Activated T-helper 1 cell treated with anti-CD3 and anti-CD28 coated beads, Interleukin-12 subunit alpha, Interleukin-12 subunit beta, Interleukin-2, Interleukin-4 antibody, amounts not matched to agents 30 ng/mL and 10 ng/mL and 1 ng/mL, durations not matched to agents 14 hours and 24 hours and 36 hours (primary cell): ENCODE measurements at regions of chr3 and their contacts with region 1.

Region 1: DNA sequence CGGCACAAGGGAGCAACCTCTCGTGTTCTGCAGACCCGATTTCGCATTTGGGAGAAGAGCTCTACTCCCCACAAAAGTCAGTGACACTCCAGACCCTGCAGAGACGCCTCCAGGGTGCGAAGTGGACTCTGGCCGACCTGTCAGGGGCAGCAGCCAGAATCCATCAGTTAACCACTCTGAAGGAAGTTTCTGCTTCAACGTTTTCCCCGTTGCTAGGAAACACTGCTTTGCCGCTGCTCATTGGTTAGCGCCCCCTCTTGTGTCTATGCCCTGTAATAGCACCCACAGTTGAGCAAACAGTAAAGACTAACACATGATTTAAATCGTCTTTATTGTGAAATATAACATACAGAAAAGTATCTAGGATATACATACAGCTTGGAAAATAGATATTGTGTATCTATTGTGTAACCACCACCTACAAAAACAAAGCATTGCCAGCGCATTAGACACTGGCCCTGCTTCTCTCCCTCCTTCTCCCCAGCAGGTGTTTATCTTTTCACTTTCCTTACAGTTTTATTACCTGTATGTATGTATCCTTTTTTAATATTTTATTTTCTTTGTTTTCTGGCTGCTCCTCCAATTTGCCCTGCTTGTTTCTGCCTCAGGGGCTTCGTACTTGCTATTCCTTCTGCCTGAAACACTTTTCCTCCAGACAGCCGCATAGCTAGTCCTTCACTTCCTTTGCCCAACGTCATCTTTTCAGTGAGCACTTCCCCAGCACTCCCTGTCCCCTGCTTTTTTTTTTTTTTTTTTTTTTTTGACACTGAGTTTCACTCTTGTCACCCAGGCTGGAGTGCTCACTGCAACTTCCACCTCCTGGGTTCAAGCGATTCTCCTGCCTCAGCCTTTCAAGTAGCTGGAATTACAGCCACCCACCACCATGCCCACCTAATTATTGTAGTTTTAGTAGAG is 38.8 kb downstream of the TMEM40 start:
- DNase-seq: peak; percentile 66
- H3K4me3 Mint-ChIP-seq: no peak overlapping the region
- H3K27ac Mint-ChIP-seq: peak overlapping the region; percentile 41
- H3K4me1 Mint-ChIP-seq: peaks cover 9% of the 10 kb centered on the region
- H3K27me3 Mint-ChIP-seq: peaks cover 5% of the 10 kb centered on the region

Region 2: GRCh38 chr3:12608376-12608775 is 111.9 kb before region 1 on chr3:
- intact Hi-C with region 1: loop called (anchors 5 kb)
- DNase-seq: no peak
- H3K4me3 Mint-ChIP-seq: no peak overlapping the region
- H3K27ac Mint-ChIP-seq: no peak overlapping the region
- H3K4me1 Mint-ChIP-seq: peaks cover 26% of the 10 kb centered on the region
- H3K27me3 Mint-ChIP-seq: no peaks in the 10 kb centered on the region

Region 3: DNA sequence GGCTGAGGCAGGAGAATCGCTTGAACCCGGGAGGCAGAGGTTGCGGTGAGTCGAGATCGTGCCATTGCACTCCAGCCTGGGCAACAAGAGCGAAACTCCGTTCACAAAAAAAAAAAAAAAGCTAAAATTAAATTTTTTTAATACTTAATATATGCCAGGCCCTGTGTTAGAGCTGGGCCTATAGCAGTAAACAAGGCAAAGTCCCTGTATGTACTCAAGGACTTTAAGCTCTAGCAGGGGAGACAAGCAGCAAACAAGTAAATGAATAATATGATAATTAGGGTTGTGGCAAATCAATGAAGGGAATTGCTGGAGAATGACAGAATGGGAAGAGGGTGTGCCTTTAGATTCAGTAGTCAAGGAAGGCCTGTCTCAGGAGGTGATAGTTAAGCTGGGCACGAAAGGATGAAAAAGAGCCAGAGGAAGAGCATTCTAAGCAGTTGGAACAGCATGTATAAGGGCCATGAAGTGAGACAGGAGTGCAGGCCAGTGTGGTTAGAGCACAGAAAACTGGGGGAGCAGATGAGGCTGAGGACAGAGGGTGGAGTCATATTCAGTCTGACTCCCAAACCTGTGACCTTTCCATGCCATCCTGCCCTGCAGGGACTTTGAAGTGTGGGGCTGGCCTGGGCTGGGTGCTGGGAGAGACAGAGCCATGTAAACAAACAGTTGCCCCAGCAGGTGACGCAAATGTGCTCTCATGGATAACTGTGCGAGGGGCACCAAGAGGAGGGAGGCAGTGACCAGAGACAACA is 49.7 kb before region 1 on chr3:
- intact Hi-C with region 1: no loop called
- DNase-seq: no peak
- H3K4me3 Mint-ChIP-seq: no peak overlapping the region
- H3K27ac Mint-ChIP-seq: no peak overlapping the region
- H3K4me1 Mint-ChIP-seq: no peaks in the 10 kb centered on the region
- H3K27me3 Mint-ChIP-seq: peaks cover 8% of the 10 kb centered on the region

Region 4: GRCh38 chr3:12706504-12707253 is 13.6 kb before region 1 on chr3:
- intact Hi-C with region 1: loop called (anchors 1 kb)
- DNase-seq: peak; percentile 53
- H3K4me3 Mint-ChIP-seq: no peak overlapping the region
- H3K27ac Mint-ChIP-seq: no peak overlapping the region
- H3K4me1 Mint-ChIP-seq: no peaks in the 10 kb centered on the region
- H3K27me3 Mint-ChIP-seq: peaks cover 8% of the 10 kb centered on the region